ENCODE measurements at regions of chr4 and their contacts with region 1.

Region 1: DNA sequence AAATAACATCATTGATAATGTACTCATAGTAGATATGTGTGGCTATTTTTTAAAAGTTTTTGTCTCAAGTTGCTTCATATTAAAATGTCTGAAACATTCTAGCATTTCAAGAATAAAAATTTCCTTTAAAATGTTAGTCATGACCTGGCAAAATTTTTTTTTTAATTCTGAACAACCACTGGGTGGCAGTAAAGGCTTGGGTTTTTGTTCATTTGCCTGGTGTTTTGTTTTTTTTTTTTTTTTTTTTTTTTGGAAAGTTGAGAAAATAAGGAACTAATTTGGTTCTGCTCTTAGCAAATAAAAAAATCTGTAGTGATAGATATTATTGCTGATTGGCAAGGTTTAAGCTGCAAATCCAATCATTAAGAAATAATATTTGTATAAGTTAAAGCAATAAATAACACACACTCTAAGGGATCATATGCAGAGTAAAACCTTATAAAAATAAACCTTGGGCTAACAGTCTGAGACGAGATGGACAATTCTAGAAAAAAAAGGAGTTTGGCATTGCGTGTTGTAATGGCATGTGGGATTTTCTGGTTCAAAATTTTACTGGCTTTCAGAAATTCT is 81.4 kb downstream of the CEP44 start:
- DNase-seq: no peak
- H3K4me3 ChIP-seq: no peak overlapping the region
- CTCF ChIP-seq: no peak
- POLR2A ChIP-seq: no peak

Region 2: GRCh38 chr4:174631901-174632758 is 267.0 kb after region 1 on chr4:
- intact Hi-C with region 1: loop called (anchors 10 kb)
- DNase-seq: no peak
- H3K4me3 ChIP-seq: no peak overlapping the region
- CTCF ChIP-seq: peak in 1 of 3 donors; percentile 31
- POLR2A ChIP-seq: no peak

Region 3: DNA sequence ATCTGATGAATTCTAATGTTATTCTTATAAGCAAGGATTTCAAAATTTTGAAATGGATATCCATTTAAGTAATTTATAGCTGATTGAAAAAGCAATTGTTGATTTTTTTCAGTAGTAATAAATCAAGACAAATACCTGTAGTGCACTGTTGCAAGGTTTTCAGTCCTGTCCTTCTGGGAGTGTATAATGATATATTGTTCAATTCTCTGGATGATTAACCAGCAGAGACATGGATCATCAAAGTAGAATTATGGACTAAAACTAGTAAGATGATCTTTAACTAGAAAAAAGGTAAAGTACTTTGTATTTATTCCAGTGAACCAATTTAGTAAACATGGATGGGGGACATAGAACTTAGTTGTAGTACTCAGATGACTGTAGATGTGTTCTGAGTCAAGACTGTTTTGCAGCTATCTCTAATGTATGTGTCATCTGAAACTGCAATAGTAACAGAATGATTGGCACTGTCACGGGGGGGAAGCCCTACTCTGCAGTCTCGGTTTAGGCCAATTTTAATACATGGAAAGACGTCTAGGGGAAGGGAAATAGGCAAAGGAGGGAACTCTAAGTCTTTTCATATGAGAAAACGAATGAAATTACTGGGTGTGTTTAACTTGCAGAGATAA is 342.1 kb after region 1 on chr4:
- intact Hi-C with region 1: loop called (anchors 10 kb)
- DNase-seq: no peak
- H3K4me3 ChIP-seq: no peak overlapping the region
- CTCF ChIP-seq: no peak
- POLR2A ChIP-seq: no peak